Panc1 (cell line): ENCODE measurements at regions of chr3 and their contacts with region 1.

Region 1: GRCh38 chr3:112642912-112643506 is 2.1 kb upstream of the CCDC80 start:
- DNase-seq: no peak
- ATAC-seq: peak; percentile 97
- H3K4me3 ChIP-seq: peak overlapping the region in 1 of 2 experiments; percentile 23; a peak in 2 of 4 replicates
- H3K27ac ChIP-seq: no peak overlapping the region
- H3K4me1 ChIP-seq: peaks cover 10% of the 10 kb centered on the region; the same call in 1 of the 2 replicates
- H3K27me3 ChIP-seq: peaks cover 17% of the 10 kb centered on the region
- CTCF ChIP-seq: peak; percentile 94

Region 2: GRCh38 chr3:112654979-112655378 is 12.0 kb after region 1 on chr3:
- CTCF ChIA-PET with region 1: no interaction called
- POLR2A ChIA-PET with region 1: no interaction called
- in situ Hi-C with region 1: no loop called
- intact Hi-C with region 1: no loop called
- DNase-seq: no peak
- ATAC-seq: no peak
- H3K4me3 ChIP-seq: no peak overlapping the region
- H3K27ac ChIP-seq: no peak overlapping the region
- H3K4me1 ChIP-seq: no peaks in the 10 kb centered on the region
- H3K27me3 ChIP-seq: no peaks in the 10 kb centered on the region
- CTCF ChIP-seq: peak; percentile 32

Region 3: DNA sequence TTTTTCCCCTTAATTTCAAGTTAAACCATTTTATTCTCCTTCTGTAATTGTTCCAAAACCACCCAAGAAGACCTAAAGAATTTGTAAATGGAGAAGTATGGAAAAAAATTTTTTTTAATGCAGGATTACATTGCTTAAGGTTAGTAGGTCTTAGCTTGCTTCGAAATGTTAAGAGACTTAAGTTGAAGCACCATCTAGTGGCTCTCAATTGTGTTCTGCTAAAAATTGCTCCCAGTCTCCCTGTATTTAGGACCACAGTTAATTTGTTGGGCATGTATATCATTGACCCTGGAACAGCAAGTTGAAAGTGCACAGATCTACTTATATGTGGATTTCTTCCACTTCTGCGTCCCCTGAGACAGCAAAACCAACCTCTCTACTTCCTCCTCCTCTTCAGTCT is 171.3 kb after region 1 on chr3:
- CTCF ChIA-PET with region 1: no interaction called
- POLR2A ChIA-PET with region 1: no interaction called
- in situ Hi-C with region 1: no loop called
- intact Hi-C with region 1: loop called (anchors 2 kb)
- DNase-seq: peak; percentile 8
- ATAC-seq: peak; percentile 62; the same call in 1 of the 2 replicates
- H3K4me3 ChIP-seq: no peak overlapping the region
- H3K27ac ChIP-seq: no peak overlapping the region
- H3K4me1 ChIP-seq: no peaks in the 10 kb centered on the region
- H3K27me3 ChIP-seq: no peaks in the 10 kb centered on the region
- CTCF ChIP-seq: peak; percentile 39; the same call in 1 of the 2 replicates

Region 4: DNA sequence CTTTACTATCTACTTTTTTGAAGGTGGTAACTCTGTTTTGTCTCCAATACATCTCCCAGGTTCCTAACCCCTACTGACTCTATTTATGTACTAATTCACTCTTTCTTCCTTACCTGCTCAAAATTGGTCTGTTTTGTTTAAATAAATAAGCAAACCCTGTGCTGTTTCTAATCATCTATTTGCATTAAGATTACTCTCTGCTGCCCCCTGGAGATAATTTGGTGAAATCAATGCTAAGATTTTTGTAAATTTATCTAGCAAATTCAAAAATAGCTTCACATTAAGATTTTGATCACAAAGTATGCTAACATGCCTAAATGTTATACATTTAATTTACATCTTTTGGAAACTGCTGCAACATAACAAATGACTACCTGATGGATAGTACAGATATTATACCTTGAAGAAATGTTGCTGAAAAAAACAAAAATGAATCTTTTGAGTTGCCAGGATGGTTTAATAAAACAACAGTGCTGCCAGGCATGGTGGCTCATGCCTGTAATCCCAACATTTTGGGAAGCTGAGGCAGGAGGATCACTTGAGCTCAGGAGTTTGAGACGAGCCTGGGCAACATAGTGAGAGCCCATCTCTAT is 336.3 kb after region 1 on chr3:
- CTCF ChIA-PET with region 1: interaction called, 8 read pairs
- POLR2A ChIA-PET with region 1: no interaction called
- in situ Hi-C with region 1: loop called (anchors 25 kb)
- intact Hi-C with region 1: loop called (anchors 1 kb)
- DNase-seq: no peak
- ATAC-seq: no peak
- H3K4me3 ChIP-seq: no peak overlapping the region
- H3K27ac ChIP-seq: no peak overlapping the region
- H3K4me1 ChIP-seq: no peaks in the 10 kb centered on the region
- H3K27me3 ChIP-seq: peaks cover 15% of the 10 kb centered on the region; the same call in 1 of the 2 replicates
- CTCF ChIP-seq: peak; percentile 74

Region 5: GRCh38 chr3:112990672-112991602 is 347.9 kb after region 1 on chr3 and contains the start of gene GTPBP8:
- CTCF ChIA-PET with region 1: no interaction called
- POLR2A ChIA-PET with region 1: no interaction called
- in situ Hi-C with region 1: loop called (anchors 25 kb)
- intact Hi-C with region 1: no loop called
- DNase-seq: peak; percentile 75
- ATAC-seq: peak; percentile 99
- H3K4me3 ChIP-seq: peak within 1 kb of the TSS; percentile 81 to 88
- H3K27ac ChIP-seq: peak within 1 kb of the TSS; percentile 94
- H3K4me1 ChIP-seq: peaks cover 18% of the 10 kb centered on the region
- H3K27me3 ChIP-seq: peaks cover 7% of the 10 kb centered on the region
- CTCF ChIP-seq: no peak
- total RNA-seq, gene GTPBP8: 16.3 TPM